Heart right ventricle (tissue), 16 donors: ENCODE measurements at regions of chr11 and their contacts with region 1.

Region 1: DNA sequence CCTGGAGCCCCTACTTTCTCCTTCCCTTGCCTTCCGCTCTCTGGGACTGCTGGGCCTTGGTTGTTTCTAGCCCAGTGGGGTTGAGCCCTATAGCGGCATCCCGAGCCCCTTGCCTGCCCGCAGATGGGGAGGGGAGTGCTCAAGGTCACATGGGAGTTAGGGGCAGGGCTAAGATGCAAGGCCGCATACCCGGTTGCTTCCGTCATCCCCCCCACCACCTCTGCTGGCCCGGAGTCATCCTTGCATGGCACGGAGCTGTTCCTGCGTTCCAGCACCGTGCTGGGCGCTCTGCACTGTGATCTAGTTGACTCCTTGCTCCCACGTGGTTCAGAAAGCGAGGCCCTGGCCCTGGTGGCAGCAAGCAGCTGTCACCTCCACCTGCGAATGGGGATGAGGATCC is 18.0 kb downstream of the FLRT1 start:
- DNase-seq: no peak
- ATAC-seq: no peak
- H3K4me3 ChIP-seq: no peak overlapping the region
- H3K27ac ChIP-seq: no peak overlapping the region
- H3K4me1 ChIP-seq: peaks cover 0 to 48% (median 35%) of the 10 kb centered on the region in 9 donors
- H3K27me3 ChIP-seq: no peaks in the 10 kb centered on the region
- CTCF ChIP-seq: no peak

Region 2: DNA sequence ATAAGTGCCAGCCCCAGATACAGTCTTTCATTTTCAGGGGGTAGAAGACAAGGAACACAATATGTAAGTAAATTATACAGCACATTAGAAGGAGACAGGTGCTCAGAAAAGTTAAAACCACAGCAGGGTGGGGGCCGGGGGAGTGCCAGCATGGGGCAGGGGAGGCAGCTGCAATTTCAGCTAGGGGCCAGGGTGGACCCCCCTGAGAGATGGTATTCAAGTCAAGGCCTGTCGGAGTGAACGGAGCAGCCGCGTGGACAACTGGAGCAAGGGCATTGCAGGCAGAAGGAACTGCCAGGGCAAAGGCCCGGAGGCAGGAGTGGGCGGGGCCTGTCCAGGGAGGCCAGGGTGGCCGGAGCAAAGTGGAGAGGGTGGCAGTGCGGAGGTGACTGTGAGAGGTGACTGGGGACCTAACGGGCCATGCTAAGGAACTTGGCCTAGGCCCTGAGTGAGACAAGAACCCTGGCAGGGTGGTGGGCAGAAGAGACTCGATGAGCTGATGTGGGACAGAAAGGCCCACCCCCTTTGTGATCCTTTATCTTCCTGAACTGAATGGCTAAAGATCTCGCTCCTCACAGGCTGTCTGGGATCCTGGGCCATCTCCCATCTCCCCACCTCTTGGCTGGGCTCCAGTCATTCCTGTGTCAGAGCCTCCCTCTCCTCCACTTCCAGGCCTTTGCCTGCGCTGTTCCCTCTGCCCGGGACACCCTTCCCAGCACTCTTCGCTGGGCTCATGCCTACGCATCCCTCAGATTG is 40.4 kb before region 1 on chr11:
- intact Hi-C with region 1: loop called in 1 of 10 experiments (anchors 5 kb)
- DNase-seq: no peak
- ATAC-seq: no peak
- H3K4me3 ChIP-seq: no peak overlapping the region
- H3K27ac ChIP-seq: no peak overlapping the region
- H3K4me1 ChIP-seq: peaks cover 0 to 11% (median 7%) of the 10 kb centered on the region in 9 donors
- H3K27me3 ChIP-seq: peaks cover 0 to 5% (median 0%) of the 10 kb centered on the region in 7 donors
- CTCF ChIP-seq: no peak